Natural killer cell (primary cell): ENCODE measurements at regions of chr7 and their contacts with region 1.

Region 1: DNA sequence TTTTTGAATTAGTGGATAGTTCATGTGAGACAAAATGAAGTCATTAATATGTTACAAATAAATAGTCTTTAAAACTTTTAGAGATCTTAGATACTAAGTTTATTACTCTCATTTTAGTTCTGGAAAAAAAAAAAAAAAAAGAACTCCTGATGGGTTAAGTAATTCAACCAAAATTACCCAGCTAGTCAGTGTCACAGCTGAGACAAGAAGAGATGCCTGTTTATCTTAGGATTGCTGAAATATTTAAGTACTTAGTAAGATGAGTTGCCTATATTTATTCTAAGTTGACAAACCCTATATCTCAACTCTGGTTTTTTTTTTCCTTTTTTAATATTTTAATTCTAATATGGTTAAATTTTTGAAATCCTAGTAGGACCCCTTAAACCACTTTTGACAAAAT is 781.0 kb upstream of the LRRN3 start:
- DNase-seq: no peak
- ATAC-seq: no peak
- H3K4me3 ChIP-seq: no peak overlapping the region
- H3K4me3 Mint-ChIP-seq: no peak overlapping the region
- H3K27ac ChIP-seq: no peak overlapping the region
- H3K27ac Mint-ChIP-seq: no peak overlapping the region
- H3K4me1 ChIP-seq: no peaks in the 10 kb centered on the region
- H3K4me1 Mint-ChIP-seq: no peaks in the 10 kb centered on the region
- H3K27me3 ChIP-seq: no peaks in the 10 kb centered on the region
- H3K27me3 Mint-ChIP-seq: no peaks in the 10 kb centered on the region
- CTCF ChIP-seq: no peak

Region 2: DNA sequence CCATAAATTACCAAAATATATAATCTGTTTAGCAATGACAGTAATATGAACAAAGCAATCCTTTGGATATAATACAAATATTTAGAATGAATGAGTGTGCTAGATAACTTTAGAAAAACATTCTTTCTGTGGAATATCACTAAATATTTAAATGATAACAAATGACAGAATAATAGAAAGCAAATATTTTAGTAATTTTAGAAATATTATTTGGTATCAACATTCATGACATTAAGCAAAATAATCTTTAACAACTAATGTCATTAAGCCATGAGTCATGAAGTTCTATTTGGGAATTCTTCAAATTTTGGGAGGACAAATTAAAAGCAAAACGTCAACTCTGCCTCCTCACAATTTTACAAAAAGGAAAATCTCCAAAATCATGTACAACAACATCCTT is 63.8 kb before region 1 on chr7:
- intact Hi-C with region 1: loop called (anchors 10 kb)
- DNase-seq: no peak
- ATAC-seq: no peak
- H3K4me3 ChIP-seq: no peak overlapping the region
- H3K4me3 Mint-ChIP-seq: no peak overlapping the region
- H3K27ac ChIP-seq: no peak overlapping the region
- H3K27ac Mint-ChIP-seq: no peak overlapping the region
- H3K4me1 ChIP-seq: no peaks in the 10 kb centered on the region
- H3K4me1 Mint-ChIP-seq: no peaks in the 10 kb centered on the region
- H3K27me3 ChIP-seq: no peaks in the 10 kb centered on the region
- H3K27me3 Mint-ChIP-seq: no peaks in the 10 kb centered on the region
- CTCF ChIP-seq: no peak

Region 3: GRCh38 chr7:110432061-110432553 is 122.2 kb after region 1 on chr7:
- intact Hi-C with region 1: no loop called
- DNase-seq: no peak
- ATAC-seq: no peak
- H3K4me3 ChIP-seq: no peak overlapping the region
- H3K4me3 Mint-ChIP-seq: no peak overlapping the region
- H3K27ac ChIP-seq: no peak overlapping the region
- H3K27ac Mint-ChIP-seq: no peak overlapping the region
- H3K4me1 ChIP-seq: no peaks in the 10 kb centered on the region
- H3K4me1 Mint-ChIP-seq: no peaks in the 10 kb centered on the region
- H3K27me3 ChIP-seq: no peaks in the 10 kb centered on the region
- H3K27me3 Mint-ChIP-seq: no peaks in the 10 kb centered on the region
- CTCF ChIP-seq: no peak

Region 4: DNA sequence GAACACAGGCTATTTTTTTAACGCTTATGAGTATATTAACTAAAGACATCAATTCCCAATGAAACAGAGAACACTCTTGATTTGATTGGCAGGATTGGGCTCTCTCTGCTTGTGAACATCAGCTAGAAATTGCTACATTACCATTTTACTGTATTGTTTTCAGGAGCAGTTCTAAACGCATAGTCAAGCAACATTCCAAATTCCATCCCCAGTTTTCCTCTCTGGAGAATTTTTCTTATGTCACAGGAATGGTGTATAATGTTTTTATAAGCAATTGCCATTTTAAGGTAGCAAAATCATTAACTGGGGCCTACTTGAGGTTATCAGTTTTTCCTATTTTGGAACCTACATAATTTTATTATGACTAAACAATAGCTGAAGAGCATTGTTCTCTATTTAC is 504.0 kb after region 1 on chr7:
- intact Hi-C with region 1: no loop called
- DNase-seq: no peak
- ATAC-seq: no peak
- H3K4me3 ChIP-seq: no peak overlapping the region
- H3K4me3 Mint-ChIP-seq: no peak overlapping the region
- H3K27ac ChIP-seq: no peak overlapping the region
- H3K27ac Mint-ChIP-seq: no peak overlapping the region
- H3K4me1 ChIP-seq: no peaks in the 10 kb centered on the region
- H3K4me1 Mint-ChIP-seq: no peaks in the 10 kb centered on the region
- H3K27me3 ChIP-seq: no peaks in the 10 kb centered on the region
- H3K27me3 Mint-ChIP-seq: no peaks in the 10 kb centered on the region
- CTCF ChIP-seq: no peak